ENCODE measurements at regions of chr2 and their contacts with region 1.

Region 1: DNA sequence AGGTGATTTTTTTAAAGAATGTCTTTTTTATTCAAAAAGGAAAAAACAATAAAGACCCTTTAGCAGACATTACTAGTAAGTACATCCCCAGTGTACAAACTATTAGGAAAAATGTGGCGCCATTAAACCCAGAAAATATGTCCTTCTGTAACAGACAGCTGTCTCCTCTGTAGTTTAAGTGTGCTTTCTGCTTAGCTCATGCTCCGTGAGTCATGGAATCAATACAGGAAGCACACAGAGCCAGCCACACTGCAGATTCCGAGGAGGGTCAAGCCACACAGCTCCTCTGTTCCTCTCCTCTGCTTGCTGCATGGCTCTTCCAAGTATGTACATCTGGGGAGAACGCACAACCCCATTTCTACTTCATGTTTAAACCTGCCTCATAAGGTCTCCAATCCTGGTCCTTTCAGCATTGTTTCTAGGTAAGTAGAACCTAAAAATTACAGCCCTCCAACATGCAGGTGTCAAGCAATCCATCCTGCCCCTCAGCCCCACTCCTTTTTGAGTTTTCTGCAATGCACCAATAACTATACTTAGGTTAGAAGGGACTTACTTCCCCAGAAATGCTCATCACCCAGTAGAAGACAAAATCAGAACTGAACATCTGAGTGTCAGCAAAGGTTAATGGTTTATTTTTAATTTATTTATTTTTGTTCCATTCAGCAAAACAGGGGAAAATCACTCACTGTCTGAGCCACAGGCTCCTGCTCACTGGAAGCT is 37.5 kb downstream of the ACVR1 start:
- DNase-seq: peak; percentile 72
- H3K4me3 Mint-ChIP-seq: peak overlapping the region; percentile 61
- H3K27ac Mint-ChIP-seq: peak overlapping the region; percentile 83
- H3K4me1 Mint-ChIP-seq: peaks cover 49% of the 10 kb centered on the region
- H3K27me3 Mint-ChIP-seq: no peaks in the 10 kb centered on the region

Region 2: DNA sequence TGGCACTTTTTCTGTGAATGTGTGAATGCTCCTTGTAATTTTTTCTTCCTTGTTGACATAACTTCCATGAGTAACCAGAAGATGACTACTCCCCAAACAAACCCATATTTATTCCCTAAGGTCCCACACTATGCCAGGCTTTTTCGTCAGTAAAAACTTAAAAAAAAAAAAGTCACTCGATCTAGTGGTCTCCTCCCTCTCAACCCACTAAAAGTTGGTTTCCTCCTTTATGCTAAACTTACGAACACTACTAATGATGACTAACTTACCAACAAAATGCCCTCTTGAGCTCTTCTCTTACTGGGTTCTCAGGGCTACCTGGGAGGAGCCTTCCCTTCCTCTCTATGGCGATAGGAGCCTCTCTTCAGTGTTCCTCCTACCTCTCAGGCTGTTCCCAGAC is 19.3 kb after region 1 on chr2:
- intact Hi-C with region 1: loop called (anchors 2 kb)
- DNase-seq: no peak
- H3K4me3 Mint-ChIP-seq: no peak overlapping the region
- H3K27ac Mint-ChIP-seq: peak overlapping the region; percentile 52
- H3K4me1 Mint-ChIP-seq: peaks cover 31% of the 10 kb centered on the region
- H3K27me3 Mint-ChIP-seq: no peaks in the 10 kb centered on the region